OCI-LY7 (cell line): ENCODE measurements at regions of chr2 and their contacts with region 1.

Region 1: GRCh38 chr2:144583741-144584453 is 64.0 kb upstream of the ZEB2 start:
- DNase-seq: no peak
- H3K4me3 ChIP-seq: no peak overlapping the region
- H3K27ac ChIP-seq: no peak overlapping the region
- H3K4me1 ChIP-seq: peaks cover 42% of the 10 kb centered on the region
- CTCF ChIP-seq: no peak

Region 2: DNA sequence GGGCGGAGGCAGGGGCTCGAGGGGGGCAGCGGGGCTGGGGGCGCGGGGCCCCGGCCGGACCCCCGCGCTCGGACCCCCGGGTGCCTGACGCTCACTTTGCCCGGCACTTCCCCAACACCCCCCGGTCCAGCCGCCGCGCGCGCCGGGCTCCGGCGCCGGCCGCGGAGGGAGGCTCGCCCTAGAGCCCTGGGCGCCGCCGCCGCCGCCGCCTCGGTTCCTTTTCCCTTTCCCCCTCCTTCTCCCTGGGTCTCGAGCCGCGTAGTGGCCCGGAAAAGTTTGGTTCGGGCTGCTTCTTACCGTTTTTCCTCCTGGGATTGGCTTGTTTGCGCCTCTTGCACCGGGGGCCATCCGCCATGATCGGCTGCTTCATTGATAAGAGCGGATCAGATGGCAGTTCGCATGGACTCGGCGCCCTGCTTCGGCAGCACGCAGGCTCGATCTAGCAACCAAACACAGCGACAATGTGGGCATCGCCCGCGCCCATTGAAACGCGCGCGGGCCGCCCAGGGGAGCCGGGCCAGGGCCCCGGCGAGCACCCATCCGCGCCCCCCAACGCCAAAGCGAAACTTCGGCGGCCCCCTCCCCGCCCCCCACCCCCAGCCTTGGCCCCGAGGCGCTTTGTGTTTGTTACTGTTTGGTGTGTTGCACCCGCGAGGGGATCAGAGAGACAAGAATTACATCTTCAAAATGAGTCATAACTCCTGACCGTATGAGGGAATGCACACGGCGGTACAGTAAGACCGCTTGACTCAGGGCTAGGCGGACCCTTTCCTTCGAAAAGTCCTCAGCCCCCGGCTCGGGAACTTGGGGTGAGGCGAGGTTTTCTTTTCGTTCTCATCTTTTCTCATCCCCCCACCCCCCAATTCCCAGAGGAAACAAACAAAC is 66.7 kb before region 1 on chr2:
- CTCF ChIA-PET with region 1: no interaction called
- POLR2A ChIA-PET with region 1: no interaction called
- intact Hi-C with region 1: loop called (anchors 1 kb)
- DNase-seq: peak; percentile 64
- H3K4me3 ChIP-seq: peak overlapping the region; percentile 83
- H3K27ac ChIP-seq: no peak overlapping the region
- H3K4me1 ChIP-seq: peaks cover 36% of the 10 kb centered on the region
- CTCF ChIP-seq: no peak

Region 3: GRCh38 chr2:144560251-144560650 is 23.6 kb before region 1 on chr2:
- CTCF ChIA-PET with region 1: interaction called, 3 read pairs
- POLR2A ChIA-PET with region 1: interaction called, 16 read pairs
- intact Hi-C with region 1: no loop called
- DNase-seq: no peak
- H3K4me3 ChIP-seq: no peak overlapping the region
- H3K27ac ChIP-seq: no peak overlapping the region
- H3K4me1 ChIP-seq: peaks cover 31% of the 10 kb centered on the region
- CTCF ChIP-seq: no peak

Region 4: DNA sequence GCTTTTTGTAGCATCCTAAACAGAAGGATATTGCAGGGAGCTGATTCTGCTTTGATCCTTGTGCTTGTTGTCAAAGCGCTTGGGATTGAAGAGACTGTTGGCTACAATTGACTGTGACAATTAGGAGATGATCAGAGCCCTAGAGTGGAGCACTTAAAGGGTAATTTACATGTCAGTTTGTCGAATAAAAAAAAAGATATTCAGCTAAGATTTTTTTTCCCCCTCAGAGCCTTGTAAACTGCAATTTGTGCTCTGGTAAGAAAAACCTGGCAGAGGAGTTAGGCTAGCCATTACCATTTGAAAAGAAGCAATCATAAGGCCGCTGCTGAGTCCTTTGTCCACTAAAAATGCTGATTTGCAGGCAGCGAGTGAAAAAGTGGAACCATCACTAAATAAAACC is 16.2 kb before region 1 on chr2:
- CTCF ChIA-PET with region 1: interaction called, 4 read pairs
- POLR2A ChIA-PET with region 1: interaction called, 17 read pairs
- intact Hi-C with region 1: no loop called
- DNase-seq: no peak
- H3K4me3 ChIP-seq: no peak overlapping the region
- H3K27ac ChIP-seq: no peak overlapping the region
- H3K4me1 ChIP-seq: peaks cover 12% of the 10 kb centered on the region
- CTCF ChIP-seq: no peak

Region 5: DNA sequence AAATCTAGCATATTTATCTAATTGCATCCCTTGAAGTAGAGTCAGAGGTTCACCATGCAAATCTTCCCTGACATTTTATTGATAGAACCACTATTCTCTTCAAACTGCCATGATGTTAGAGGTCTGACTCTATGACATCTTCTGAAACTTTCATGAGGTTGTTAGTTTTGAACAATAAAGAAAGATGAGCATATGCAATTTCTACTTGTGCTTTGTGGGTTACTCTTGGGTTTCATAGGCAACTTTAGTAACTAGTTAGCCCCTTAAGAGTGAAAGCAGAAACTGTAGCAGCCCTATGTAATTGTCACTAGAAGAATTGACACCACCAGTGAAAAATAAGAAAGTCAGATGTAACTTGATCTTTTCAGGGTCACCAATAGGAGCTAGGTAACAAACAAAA is 10.9 kb before region 1 on chr2:
- CTCF ChIA-PET with region 1: interaction called, 4 read pairs
- POLR2A ChIA-PET with region 1: interaction called, 17 read pairs
- intact Hi-C with region 1: no loop called
- DNase-seq: no peak
- H3K4me3 ChIP-seq: no peak overlapping the region
- H3K27ac ChIP-seq: no peak overlapping the region
- H3K4me1 ChIP-seq: no peaks in the 10 kb centered on the region
- CTCF ChIP-seq: no peak

Region 6: GRCh38 chr2:144596073-144596871 is 12.4 kb after region 1 on chr2:
- CTCF ChIA-PET with region 1: interaction called, 4 read pairs
- POLR2A ChIA-PET with region 1: interaction called, 24 read pairs
- intact Hi-C with region 1: no loop called
- DNase-seq: peak; percentile 74
- H3K4me3 ChIP-seq: peak overlapping the region; percentile 59
- H3K27ac ChIP-seq: peak overlapping the region; percentile 57
- H3K4me1 ChIP-seq: peaks cover 37% of the 10 kb centered on the region
- CTCF ChIP-seq: no peak